Posterior cingulate gyrus (tissue), 11 donors: ENCODE measurements at regions of chr1 and their contacts with region 1.

Region 1: GRCh38 chr1:173429471-173430402 is 47.4 kb upstream of the PRDX6 start:
- DNase-seq: peak; percentile 69 to 96 (median 76)

Region 2: GRCh38 chr1:172745014-172745413 is 684.7 kb before region 1 on chr1:
- intact Hi-C with region 1: loop called (anchors 10 kb)
- DNase-seq: no peak

Region 3: DNA sequence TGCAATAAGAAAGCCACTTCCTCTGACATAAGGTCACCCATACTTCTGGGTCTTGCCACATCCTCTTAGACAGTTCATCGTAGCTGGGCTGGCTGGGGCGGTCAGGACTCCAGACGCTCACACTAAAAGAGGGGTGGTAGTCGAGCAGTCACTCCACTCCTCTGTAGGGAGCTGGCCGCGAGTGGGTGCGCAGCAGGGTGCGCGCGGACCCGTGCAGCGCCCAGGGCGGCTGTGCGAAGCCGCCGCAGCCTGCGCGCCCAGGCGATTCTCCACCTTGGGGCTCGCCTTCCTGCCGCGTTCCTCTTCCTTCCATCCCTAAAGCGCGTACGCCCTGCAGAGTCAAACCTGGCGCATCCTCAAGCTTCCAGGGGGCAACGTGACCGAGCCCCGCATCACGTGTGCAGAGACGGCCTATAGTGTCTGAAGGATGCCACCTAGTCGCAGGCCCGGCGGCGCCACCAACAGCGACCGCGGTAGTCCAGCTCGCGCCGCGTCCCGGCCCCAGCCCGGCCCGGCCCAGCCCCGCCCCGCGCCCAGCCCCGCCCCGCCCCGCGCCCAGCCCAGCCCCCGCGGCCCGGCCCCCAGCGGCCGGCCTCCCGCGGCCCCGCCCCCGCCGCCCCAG is 47.0 kb after region 1 on chr1:
- intact Hi-C with region 1: loop called (anchors 1 kb)
- DNase-seq: peak; percentile 90 to 99 (median 95)

Region 4: DNA sequence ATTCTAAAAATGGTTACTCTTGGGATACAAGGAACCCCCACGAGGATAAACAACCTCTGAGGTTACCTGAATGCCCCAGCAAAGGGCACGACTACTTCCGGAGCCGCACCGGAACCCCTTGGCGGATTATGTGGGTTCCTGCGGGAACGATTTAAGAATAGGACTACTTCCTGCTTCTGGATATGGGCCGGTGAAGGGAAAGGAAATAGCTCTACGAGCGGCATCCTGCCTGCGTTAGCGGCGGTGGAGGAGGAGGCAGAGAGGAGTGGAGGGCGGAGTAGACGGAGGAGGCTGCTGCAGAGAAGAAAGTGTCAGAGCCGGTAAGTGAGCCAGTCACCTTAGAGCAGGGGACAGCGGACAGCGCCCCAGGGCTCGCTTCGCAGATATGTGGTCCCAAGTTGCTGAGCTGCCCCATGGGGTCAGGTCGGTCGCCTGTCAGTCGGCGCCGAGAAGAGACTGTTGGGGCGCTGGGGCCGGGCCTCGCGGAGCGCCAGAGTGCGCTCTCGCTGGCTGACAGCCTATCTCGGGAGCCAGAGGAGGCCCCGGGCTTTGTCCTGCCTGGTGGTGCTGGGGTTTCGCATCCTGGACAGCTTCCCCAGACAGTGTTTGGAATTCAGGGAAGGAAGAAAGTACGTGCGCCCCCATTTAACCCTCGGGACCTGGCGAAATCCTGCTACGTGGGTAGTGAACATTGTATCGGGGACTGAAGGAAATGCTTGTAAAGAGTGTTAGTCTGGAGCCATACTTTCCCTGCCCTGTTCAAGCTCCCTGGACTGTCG is 285.2 kb after region 1 on chr1 and contains the start of gene KLHL20:
- intact Hi-C with region 1: loop called (anchors 5 kb)
- DNase-seq: peak; percentile 63 to 96 (median 78)

Region 5: GRCh38 chr1:174217787-174218574 is 788.2 kb after region 1 on chr1:
- intact Hi-C with region 1: loop called (anchors 10 kb)
- DNase-seq: no peak